Ovary (tissue), 10 donors: ENCODE measurements at regions of chr21 and their contacts with region 1.

Region 1: DNA sequence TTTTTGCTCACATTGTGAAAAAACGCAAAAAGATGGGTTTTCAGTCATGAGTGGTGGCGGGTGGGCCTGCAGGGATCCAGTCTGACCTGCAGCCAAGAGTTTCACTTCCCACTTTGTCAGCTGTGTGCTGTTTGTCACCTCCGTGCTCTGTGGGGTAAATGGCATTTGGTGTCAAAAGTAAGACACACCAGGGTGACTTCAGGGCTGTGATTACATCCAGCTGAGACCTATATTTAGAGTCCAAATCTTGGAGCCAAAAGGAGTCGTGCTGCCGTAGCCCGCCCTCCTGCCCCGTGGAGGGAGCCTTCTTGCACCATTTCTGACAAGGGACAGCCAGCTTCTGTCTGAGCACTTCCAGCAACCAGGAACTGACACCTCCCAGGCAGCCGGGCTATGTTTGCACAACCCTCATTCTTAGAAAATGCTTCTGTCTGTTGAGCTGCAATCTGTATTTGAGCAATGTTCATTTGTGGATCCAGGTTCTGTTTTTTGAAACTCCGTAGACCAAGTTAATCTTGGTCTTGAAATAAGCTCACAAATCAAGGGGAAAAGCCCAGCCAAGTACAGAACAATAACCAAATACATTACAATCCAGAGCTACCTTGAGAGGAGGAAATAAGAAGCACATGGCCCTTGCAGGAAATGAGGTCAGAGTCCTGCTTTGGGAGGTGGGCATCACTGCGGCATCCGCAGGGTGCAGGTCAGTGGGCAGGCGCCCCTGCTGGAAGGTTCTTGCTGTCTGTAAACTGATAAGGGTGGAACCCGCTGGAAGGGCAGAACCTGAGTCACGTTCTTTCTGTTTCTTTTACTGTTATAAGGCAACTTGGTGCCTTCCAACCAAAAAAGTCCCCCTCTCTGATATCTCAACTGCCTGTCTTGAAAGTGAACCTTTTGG is 14.4 kb downstream of the ABCG1 start:
- DNase-seq: peak in 3 of 5 donors; percentile 41 to 45 (median 42)
- H3K4me3 ChIP-seq: no peak overlapping the region
- H3K27ac ChIP-seq: peak overlapping the region in 1 of 2 donors; percentile 82
- H3K4me1 ChIP-seq: peaks cover 16% of the 10 kb centered on the region
- H3K27me3 ChIP-seq: no peaks in the 10 kb centered on the region
- CTCF ChIP-seq: peak in 1 of 3 donors; percentile 11
- EP300 ChIP-seq: no peak
- POLR2A ChIP-seq: no peak

Region 2: DNA sequence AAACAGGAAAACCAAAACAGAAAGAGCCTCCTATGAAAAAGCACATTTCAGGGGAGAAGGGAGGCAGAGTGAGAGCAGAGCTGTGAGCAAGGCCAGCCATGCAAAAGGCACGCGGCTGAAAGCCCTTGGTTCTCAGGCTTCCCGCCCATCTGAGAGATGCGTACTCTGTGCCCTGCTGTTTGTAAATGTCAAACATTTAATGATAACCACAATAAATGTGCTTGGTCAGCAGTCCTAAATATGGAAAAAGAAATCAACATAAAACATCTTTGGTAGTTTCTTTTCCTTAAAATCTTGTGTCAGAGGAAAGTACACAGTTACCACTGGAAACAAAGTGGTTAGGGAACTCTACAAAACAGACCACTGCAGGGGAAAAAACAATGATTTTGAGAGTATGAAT is 1669.4 kb before region 1 on chr21:
- intact Hi-C with region 1: loop called in 1 of 4 experiments (anchors 10 kb)
- DNase-seq: no peak
- H3K4me3 ChIP-seq: no peak overlapping the region
- H3K27ac ChIP-seq: no peak overlapping the region
- H3K4me1 ChIP-seq: no peaks in the 10 kb centered on the region
- H3K27me3 ChIP-seq: no peaks in the 10 kb centered on the region
- CTCF ChIP-seq: no peak
- EP300 ChIP-seq: no peak
- POLR2A ChIP-seq: no peak

Region 3: GRCh38 chr21:41743321-41743720 is 490.0 kb before region 1 on chr21:
- intact Hi-C with region 1: no loop called
- DNase-seq: no peak
- H3K4me3 ChIP-seq: no peak overlapping the region
- H3K27ac ChIP-seq: no peak overlapping the region
- H3K4me1 ChIP-seq: no peaks in the 10 kb centered on the region
- H3K27me3 ChIP-seq: no peaks in the 10 kb centered on the region
- CTCF ChIP-seq: no peak
- EP300 ChIP-seq: no peak
- POLR2A ChIP-seq: no peak

Region 4: DNA sequence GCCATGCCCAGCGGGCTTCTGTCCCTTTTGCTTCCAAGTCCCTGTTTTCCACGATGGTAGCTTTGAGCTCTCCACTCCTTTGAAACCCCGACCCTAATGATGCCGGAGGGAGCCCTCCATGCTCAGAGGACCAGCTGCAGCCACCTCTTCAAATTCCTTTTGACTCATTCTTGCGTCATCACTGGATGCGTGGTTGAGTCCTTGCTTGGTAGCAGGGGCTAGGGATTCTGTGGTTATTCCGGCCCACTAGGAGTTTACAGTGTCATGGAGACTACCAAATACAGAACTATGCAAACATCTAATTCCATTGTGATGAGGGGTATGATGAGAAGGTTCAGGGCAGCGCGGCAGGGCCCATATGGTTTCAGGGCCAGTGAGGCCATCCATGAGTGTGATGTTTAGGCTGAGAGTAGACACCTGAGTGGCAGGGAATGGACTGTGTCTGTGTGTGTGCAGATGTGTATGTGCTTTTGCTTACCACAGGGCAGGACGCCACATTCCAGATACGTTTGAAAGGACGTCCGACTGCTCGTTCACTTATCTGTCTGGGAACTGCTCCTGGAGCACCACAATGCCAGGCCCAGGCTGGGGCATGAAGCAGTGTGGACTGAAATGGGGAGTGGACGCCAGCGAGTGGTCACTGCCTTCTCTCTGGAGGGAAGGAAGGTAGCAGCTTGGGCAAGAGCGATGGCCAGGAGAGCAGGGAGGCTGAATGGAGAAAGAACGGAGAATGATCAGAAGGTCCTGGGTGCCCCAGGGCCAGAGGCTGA is 192.7 kb before region 1 on chr21:
- intact Hi-C with region 1: no loop called
- DNase-seq: peak in 2 of 5 donors; percentile 33 to 56
- H3K4me3 ChIP-seq: no peak overlapping the region
- H3K27ac ChIP-seq: peak overlapping the region in 1 of 2 donors; percentile 20
- H3K4me1 ChIP-seq: peaks cover 10% of the 10 kb centered on the region
- H3K27me3 ChIP-seq: no peaks in the 10 kb centered on the region
- CTCF ChIP-seq: no peak
- EP300 ChIP-seq: no peak
- POLR2A ChIP-seq: no peak